ENCODE measurements at regions of chr11 and their contacts with region 1.

Region 1: GRCh38 chr11:9231848-9232177 is 33.3 kb downstream of the DENND5A start:
- DNase-seq: no peak
- H3K4me3 ChIP-seq: no peak overlapping the region
- H3K4me3 Mint-ChIP-seq: no peak overlapping the region
- H3K27ac Mint-ChIP-seq: no peak overlapping the region
- H3K4me1 ChIP-seq: peaks cover 34% of the 10 kb centered on the region
- H3K4me1 Mint-ChIP-seq: peaks cover 28% of the 10 kb centered on the region
- H3K27me3 ChIP-seq: no peaks in the 10 kb centered on the region
- H3K27me3 Mint-ChIP-seq: no peaks in the 10 kb centered on the region
- CTCF ChIP-seq: no peak

Region 2: DNA sequence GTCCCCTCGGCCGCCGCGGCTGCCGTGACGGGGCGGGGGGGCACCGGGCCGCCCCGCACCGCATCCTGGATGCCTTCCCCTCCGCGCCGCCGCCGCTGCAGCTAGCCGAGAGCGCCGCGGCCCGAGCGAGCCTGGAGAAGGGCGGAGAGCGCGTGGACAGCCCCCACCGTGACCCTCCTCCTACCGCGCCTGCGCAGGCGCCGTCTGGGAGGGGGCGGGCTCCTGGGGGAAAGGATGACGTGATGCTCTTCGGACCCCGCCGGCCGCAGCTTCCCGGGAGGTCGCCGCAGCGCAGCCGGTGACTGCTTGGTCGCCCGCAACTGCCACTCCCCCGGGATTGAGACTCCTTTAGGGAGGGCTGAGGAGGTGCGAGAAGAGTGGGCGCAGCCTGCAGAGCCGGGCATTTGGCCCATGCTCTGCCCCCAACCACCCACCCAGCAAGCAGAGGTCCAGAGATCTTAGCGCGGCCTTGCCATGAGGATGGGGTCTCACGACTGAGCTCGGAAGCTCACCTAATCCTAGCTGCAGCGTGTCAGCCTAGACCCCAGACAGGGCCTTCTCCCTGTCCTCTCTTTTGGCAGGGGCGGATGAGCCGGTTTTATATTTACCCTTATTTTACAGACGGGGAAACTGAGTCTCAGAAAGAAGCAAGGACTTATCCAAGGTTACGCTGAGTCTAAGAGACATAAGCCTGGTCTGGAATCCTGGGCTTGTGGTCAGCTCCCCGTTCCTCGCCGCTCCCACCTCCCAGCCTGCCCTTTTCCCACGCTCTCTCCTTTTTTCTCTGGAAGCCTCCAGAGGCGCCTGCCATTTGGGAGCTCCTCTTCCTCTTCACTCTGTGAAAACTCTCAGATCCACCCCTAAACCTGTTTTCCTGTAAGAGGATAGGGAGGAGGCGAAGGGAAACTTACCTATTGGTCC is 33.7 kb after region 1 on chr11 and contains the start of gene DENND5A:
- CTCF ChIA-PET with region 1: no interaction called
- POLR2A ChIA-PET with region 1: interaction called, 10 read pairs
- intact Hi-C with region 1: no loop called
- DNase-seq: peak; percentile 84 to 91
- H3K4me3 ChIP-seq: peak within 1 kb of the TSS; percentile 83
- H3K4me3 Mint-ChIP-seq: peak within 1 kb of the TSS; percentile 94
- H3K27ac Mint-ChIP-seq: peak within 1 kb of the TSS; percentile 95
- H3K4me1 ChIP-seq: peaks cover 30% of the 10 kb centered on the region
- H3K4me1 Mint-ChIP-seq: peaks cover 47% of the 10 kb centered on the region
- H3K27me3 ChIP-seq: no peaks in the 10 kb centered on the region
- H3K27me3 Mint-ChIP-seq: no peaks in the 10 kb centered on the region
- CTCF ChIP-seq: no peak
- total RNA-seq, gene DENND5A: 54.3 and 58.0 TPM in 2 replicates

Measured in Caco-2 (cell line).